Keratinocyte (primary cell): ENCODE measurements at regions of chr12 and their contacts with region 1.

Region 1: DNA sequence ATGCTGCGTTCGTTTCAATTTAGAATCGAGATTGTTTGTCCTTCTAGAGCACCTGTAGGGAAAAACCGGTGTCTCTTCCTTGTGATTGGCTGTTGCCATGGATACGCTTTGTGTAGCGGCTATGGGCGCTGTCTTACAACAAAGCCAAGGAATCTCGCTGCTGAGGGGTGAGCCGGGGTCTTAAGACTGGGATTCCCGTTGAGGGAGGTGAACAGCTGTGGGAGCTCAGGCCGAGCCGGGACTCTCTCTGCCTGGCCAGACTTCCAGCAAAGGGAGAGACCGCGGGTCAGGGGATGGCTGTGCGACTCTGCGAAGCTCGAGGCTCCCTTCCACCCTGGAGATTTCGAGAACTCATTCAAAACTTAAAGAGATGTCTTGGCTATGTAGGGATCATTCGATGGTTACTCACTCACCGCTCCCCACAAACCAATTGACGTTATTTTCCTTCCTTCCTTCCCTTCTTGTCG is at the starts of genes LRRIQ1 and TSPAN19:
- DNase-seq: peak; percentile 42
- H3K4me3 ChIP-seq: peak within 1 kb of the TSS; percentile 53 to 69 (median 68)
- H3K27ac ChIP-seq: no peak within 1 kb of the TSS
- H3K4me1 ChIP-seq: no peaks in the 10 kb centered on the region
- H3K27me3 ChIP-seq: peaks cover 5% of the 10 kb centered on the region
- CTCF ChIP-seq: no peak
- polyA plus RNA-seq, gene LRRIQ1: 0.37 to 0.97 TPM (median 0.84 TPM) in 3 replicates
- polyA plus RNA-seq, gene TSPAN19: 0.05 to 0.11 TPM (median 0.06 TPM) in 3 replicates

Region 2: GRCh38 chr12:84658877-84659276 is 377.4 kb before region 1 on chr12:
- dilution Hi-C with region 1: no loop called
- DNase-seq: no peak
- H3K4me3 ChIP-seq: no peak overlapping the region
- H3K27ac ChIP-seq: no peak overlapping the region
- H3K4me1 ChIP-seq: no peaks in the 10 kb centered on the region
- H3K27me3 ChIP-seq: no peaks in the 10 kb centered on the region
- CTCF ChIP-seq: no peak

Region 3: DNA sequence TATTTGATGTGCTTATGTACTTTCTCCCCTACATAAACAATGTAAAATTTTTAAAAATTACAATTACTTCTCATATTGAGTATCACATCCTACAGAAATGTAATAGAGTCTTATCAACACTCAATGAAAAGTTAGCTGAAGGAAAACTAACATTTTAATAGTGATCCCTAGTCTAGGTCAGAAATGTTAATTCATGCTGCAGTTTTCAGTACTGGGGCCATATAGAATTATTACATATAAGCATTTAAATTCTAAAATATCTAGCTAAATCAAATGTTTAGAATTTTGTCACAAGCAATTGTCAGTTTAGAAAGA is 161.5 kb before region 1 on chr12:
- dilution Hi-C with region 1: loop called (anchors 25 kb)
- DNase-seq: no peak
- H3K4me3 ChIP-seq: no peak overlapping the region
- H3K27ac ChIP-seq: no peak overlapping the region
- H3K4me1 ChIP-seq: no peaks in the 10 kb centered on the region
- H3K27me3 ChIP-seq: no peaks in the 10 kb centered on the region
- CTCF ChIP-seq: no peak

Region 4: DNA sequence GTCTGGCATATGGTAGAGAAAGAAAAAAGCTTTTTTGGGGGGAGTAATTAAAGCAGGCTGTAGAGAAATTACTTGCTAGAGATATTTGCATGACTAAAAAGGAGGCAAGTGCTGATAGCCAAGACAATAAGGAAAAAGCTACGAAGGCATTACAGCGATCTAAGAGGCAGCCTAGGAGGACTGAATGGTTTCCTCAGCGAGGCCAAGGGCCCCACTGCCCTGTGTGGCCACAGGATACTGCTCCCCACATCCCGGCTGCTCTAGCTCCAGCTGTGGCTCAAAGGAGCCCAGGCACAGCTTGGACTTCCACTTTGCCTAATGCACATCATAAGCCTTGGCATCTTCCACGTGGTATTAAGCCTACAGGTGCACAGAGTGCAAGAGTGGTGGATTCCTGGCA is 53.5 kb after region 1 on chr12:
- dilution Hi-C with region 1: no loop called
- DNase-seq: no peak
- H3K4me3 ChIP-seq: no peak overlapping the region
- H3K27ac ChIP-seq: no peak overlapping the region
- H3K4me1 ChIP-seq: peaks cover 5% of the 10 kb centered on the region
- H3K27me3 ChIP-seq: peaks cover 3% of the 10 kb centered on the region
- CTCF ChIP-seq: no peak